RWPE1 (cell line): ENCODE measurements at regions of chr14 and their contacts with region 1.

Region 1: GRCh38 chr14:100350276-100350926 is 27.3 kb downstream of the SLC25A47 start:
- DNase-seq: no peak
- H3K27ac ChIP-seq: no peak overlapping the region
- CTCF ChIP-seq: no peak

Region 2: GRCh38 chr14:100131193-100131592 is 219.2 kb before region 1 on chr14:
- CTCF ChIA-PET with region 1: no interaction called
- POLR2A ChIA-PET with region 1: interaction called, 13 read pairs
- DNase-seq: no peak
- H3K27ac ChIP-seq: no peak overlapping the region
- CTCF ChIP-seq: no peak